Posterior vena cava (tissue), 2 donors: ENCODE measurements at regions of chr12 and their contacts with region 1.

Region 1: DNA sequence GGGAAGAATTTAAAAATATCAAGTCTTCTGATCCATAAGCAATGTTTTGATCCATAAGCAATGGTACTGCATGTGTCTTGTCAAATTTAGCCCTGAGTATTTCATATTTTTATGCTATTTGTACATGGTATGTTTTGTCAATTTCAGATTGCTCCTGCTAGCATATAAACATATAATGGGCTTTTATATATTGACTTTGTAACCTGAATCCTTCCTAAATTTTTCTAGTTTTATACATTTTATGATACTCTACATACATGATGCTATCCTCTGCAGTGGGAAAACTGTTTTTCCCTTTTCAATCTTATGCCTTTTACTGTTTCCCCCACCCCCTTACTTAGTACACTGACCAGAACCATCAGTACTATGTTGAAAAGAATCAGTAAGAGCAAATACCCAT is 75.1 kb downstream of the R3HDM2 start:
- DNase-seq: no peak

Region 2: GRCh38 chr12:57248934-57249742 is 106.6 kb before region 1 on chr12:
- intact Hi-C with region 1: loop called in 1 of 2 experiments (anchors 5 kb)
- DNase-seq: peak; percentile 77

Region 3: GRCh38 chr12:57340104-57340503 is 15.6 kb before region 1 on chr12:
- intact Hi-C with region 1: loop called in 1 of 2 experiments (anchors 2 kb)
- DNase-seq: no peak